Transverse colon (tissue), 4 donors: ENCODE measurements at regions of chr2 and their contacts with region 1.

Region 1: GRCh38 chr2:156311976-156312375 is 20.5 kb downstream of the NR4A2 start:
- DNase-seq: no peak
- H3K4me3 ChIP-seq: no peak overlapping the region
- H3K27ac ChIP-seq: no peak overlapping the region
- H3K4me1 ChIP-seq: no peaks in the 10 kb centered on the region
- H3K27me3 ChIP-seq: peaks cover 10% of the 10 kb centered on the region
- CTCF ChIP-seq: no peak
- EP300 ChIP-seq: no peak
- POLR2A ChIP-seq: no peak

Region 2: DNA sequence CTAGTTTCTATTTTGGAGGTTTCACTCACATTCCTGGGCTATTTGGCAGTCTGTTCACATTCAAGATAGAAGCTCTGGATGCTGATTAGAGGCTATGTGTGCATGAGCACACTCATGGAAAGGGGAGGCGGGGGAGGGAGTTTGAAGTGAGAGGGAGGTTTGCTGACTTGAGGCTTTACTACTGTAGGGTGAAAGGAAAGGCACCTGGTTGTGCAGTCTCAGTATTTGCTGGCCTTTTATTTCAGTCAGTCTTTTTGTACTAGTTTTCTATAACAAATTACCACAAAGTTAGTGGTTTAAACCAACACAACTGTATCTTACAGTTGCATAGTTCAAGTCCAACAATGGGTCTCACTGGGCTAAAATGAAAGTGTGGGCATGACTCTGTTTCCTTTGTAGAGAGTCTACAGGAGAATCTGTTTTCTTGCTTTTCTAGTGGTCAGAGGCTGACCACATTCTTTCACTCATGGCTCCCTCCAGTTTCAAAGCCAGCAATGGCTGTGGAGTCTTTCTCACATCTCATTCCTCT is 68.2 kb after region 1 on chr2:
- in situ Hi-C with region 1: no loop called
- intact Hi-C with region 1: no loop called
- DNase-seq: no peak
- H3K4me3 ChIP-seq: no peak overlapping the region
- H3K27ac ChIP-seq: no peak overlapping the region
- H3K4me1 ChIP-seq: no peaks in the 10 kb centered on the region
- H3K27me3 ChIP-seq: no peaks in the 10 kb centered on the region
- CTCF ChIP-seq: no peak
- EP300 ChIP-seq: no peak
- POLR2A ChIP-seq: no peak

Region 3: GRCh38 chr2:156657809-156658208 is 345.8 kb after region 1 on chr2:
- in situ Hi-C with region 1: no loop called
- intact Hi-C with region 1: loop called (anchors 5 kb)
- DNase-seq: no peak
- H3K4me3 ChIP-seq: no peak overlapping the region
- H3K27ac ChIP-seq: no peak overlapping the region
- H3K4me1 ChIP-seq: no peaks in the 10 kb centered on the region
- H3K27me3 ChIP-seq: no peaks in the 10 kb centered on the region
- CTCF ChIP-seq: no peak
- EP300 ChIP-seq: no peak
- POLR2A ChIP-seq: no peak